ENCODE measurements at regions of chr2 and their contacts with region 1.

Region 1: DNA sequence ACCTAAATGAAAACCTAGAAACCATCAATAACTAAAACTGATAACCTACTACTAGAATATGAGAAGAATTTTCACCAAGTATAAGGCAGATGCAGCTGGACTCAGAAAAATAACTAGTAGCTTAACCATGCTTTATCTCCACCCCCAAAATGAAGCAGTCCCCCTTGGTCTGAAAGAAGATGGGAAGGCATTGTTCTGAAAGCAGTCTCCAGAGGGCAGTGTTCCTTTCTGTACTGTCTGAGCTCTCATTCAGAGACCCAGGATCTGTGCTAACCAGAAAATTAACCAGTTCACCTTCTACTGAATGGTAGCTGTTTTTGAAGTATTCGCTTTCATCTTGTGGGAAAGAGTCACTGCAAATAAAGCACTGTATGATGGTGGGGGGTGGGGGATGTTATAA is 273.0 kb downstream of the PDE11A start:
- DNase-seq: peak; percentile 22
- ATAC-seq: peak; percentile 95
- H3K4me3 Mint-ChIP-seq: no peak overlapping the region
- H3K27ac Mint-ChIP-seq: no peak overlapping the region
- H3K4me1 Mint-ChIP-seq: peaks cover 22% of the 10 kb centered on the region
- H3K27me3 Mint-ChIP-seq: no peaks in the 10 kb centered on the region
- CTCF ChIP-seq: peak; percentile 39; the same call in 1 of the 2 replicates

Region 2: DNA sequence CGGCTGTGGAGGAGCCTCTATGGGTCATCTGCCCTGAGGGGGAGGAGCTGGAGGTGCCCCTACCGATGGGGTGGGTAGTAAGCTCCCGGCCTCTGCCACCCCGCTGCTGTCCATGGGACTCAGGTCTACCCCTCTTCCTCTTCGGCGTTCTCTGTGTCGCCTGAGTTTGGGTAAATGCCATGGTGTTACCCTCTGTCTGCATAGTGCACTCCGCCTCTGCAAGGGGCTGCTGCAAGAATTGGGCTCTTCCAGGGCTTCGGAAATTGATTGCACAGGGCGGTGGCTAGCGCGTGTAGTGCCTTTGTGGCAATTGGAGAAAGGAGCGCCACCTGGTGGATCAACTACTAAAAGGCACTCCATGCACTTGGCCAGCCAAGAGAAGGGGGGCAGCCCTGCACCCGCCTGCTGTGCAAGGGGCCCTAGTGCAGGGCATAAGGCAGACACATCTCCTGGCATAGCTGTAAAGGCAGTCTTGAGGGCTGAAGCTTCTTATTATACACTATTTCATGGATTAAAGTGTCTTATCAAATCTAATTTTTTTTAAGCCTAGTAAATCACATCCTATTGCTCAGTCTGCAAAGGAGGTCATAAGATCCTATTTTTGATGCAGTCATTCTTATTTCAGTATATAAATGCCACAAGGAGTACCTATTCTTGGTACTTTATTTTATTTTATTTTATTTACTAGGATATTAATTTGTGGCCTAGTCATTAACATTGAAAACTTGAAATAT is 35.8 kb before region 1 on chr2:
- CTCF ChIA-PET with region 1: interaction called, 11 read pairs
- POLR2A ChIA-PET with region 1: no interaction called
- DNase-seq: peak; percentile 90
- ATAC-seq: peak; percentile 94
- H3K4me3 Mint-ChIP-seq: peak overlapping the region; percentile 57
- H3K27ac Mint-ChIP-seq: no peak overlapping the region
- H3K4me1 Mint-ChIP-seq: peaks cover 24% of the 10 kb centered on the region
- H3K27me3 Mint-ChIP-seq: peaks cover 48% of the 10 kb centered on the region
- CTCF ChIP-seq: peak; percentile 61

Region 3: DNA sequence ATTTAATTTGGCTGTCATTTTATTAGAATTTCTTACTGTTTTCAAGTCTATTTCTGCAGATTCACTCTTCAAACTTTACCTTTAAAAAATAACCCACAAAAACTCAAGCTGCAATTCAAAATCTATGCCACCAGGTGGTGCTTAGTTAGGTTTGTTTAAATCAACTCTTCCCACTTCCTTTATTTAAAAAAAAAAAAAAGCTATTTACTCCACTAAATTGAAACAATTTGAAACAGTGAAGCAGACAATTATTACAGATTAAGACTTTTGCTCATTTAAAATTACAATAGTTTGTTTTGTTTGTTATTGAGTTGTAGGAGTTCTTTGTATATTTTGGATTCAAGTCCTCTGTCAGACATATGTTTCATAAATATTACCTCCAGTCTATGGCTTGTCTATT is 27.0 kb before region 1 on chr2:
- CTCF ChIA-PET with region 1: interaction called, 17 read pairs
- POLR2A ChIA-PET with region 1: no interaction called
- DNase-seq: no peak
- ATAC-seq: no peak
- H3K4me3 Mint-ChIP-seq: no peak overlapping the region
- H3K27ac Mint-ChIP-seq: no peak overlapping the region
- H3K4me1 Mint-ChIP-seq: peaks cover 3% of the 10 kb centered on the region; the same call in 1 of the 2 replicates
- H3K27me3 Mint-ChIP-seq: peaks cover 2% of the 10 kb centered on the region
- CTCF ChIP-seq: peak; percentile 49

Measured in WTC11 (cell line).